CD4-positive, alpha-beta T cell (primary cell): ENCODE measurements at regions of chr12 and their contacts with region 1.

Region 1: DNA sequence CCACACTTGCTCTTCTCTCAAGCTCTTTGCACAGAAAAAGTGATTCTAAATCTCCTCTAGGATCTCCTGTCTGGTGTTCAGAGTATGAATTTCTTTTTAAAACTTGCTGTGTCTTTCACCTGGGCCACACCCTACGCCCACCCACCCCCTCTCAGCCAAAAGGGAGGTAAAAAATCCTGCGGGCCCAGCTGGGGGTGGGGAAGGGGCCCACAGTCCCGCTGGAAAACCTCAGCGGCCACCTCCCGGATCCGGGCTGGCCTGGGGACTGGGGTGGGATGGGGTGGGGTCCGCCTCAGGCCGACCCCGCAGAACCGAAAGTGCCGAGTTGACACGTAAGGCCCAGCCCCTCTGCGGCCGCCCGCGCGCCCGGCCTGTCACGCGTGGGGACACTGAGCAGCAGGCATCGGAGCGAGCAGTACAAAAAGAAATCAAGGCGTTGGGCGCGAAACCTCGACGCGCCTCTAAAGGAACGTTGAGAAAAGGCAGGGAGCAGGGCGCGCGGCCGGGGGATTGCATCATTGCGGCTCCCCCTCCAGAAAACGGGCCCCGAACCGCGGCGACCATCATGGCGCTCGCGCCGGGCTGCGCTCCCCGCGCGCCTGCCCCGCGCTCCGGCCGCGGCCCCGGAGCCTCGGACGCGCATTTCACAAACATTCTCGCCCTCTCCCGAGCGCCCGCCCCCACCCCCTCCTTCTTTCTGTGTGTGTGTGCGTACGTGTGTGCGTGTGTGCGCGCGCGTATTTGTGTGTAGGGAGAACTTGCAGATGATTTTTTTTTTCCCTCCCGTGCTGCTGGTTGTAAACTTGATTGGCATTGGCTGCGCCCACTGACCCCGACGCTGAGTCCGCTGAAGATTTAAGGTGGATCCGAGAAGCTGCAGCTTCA is 7.7 kb downstream of the CDKN1B start:
- DNase-seq: peak in 11 of 14 experiments; percentile 72 to 98 (median 84)
- ATAC-seq: peak; percentile 56
- H3K4me3 ChIP-seq: peak overlapping the region; percentile 97
- H3K4me3 Mint-ChIP-seq: peak overlapping the region; percentile 98
- H3K27ac ChIP-seq: peak overlapping the region; percentile 89 to 91
- H3K27ac Mint-ChIP-seq: peak overlapping the region; percentile 95
- H3K4me1 ChIP-seq: peaks cover 37% of the 10 kb centered on the region
- H3K4me1 Mint-ChIP-seq: peaks cover 63% of the 10 kb centered on the region
- H3K27me3 ChIP-seq: no peaks in the 10 kb centered on the region
- H3K27me3 Mint-ChIP-seq: peaks cover 8% of the 10 kb centered on the region
- CTCF ChIP-seq: no peak

Region 2: GRCh38 chr12:12349711-12350665 is 374.9 kb before region 1 on chr12 and contains the start of gene MANSC1:
- CTCF ChIA-PET with region 1: interaction called, 4 read pairs
- POLR2A ChIA-PET with region 1: interaction called, 19 read pairs
- intact Hi-C with region 1: loop called in 1 of 2 experiments (anchors 5 kb)
- DNase-seq: peak; percentile 14 to 79 (median 52)
- ATAC-seq: peak; percentile 71
- H3K4me3 ChIP-seq: peak within 1 kb of the TSS; percentile 54
- H3K4me3 Mint-ChIP-seq: peak within 1 kb of the TSS; percentile 72
- H3K27ac ChIP-seq: peak within 1 kb of the TSS; percentile 50 to 72
- H3K27ac Mint-ChIP-seq: peak within 1 kb of the TSS; percentile 79
- H3K4me1 ChIP-seq: peaks cover 24% of the 10 kb centered on the region
- H3K4me1 Mint-ChIP-seq: peaks cover 62% of the 10 kb centered on the region
- H3K27me3 ChIP-seq: no peaks in the 10 kb centered on the region
- H3K27me3 Mint-ChIP-seq: no peaks in the 10 kb centered on the region
- CTCF ChIP-seq: peak; percentile 48
- total RNA-seq, gene MANSC1: 0.33 to 0.45 TPM

Region 3: DNA sequence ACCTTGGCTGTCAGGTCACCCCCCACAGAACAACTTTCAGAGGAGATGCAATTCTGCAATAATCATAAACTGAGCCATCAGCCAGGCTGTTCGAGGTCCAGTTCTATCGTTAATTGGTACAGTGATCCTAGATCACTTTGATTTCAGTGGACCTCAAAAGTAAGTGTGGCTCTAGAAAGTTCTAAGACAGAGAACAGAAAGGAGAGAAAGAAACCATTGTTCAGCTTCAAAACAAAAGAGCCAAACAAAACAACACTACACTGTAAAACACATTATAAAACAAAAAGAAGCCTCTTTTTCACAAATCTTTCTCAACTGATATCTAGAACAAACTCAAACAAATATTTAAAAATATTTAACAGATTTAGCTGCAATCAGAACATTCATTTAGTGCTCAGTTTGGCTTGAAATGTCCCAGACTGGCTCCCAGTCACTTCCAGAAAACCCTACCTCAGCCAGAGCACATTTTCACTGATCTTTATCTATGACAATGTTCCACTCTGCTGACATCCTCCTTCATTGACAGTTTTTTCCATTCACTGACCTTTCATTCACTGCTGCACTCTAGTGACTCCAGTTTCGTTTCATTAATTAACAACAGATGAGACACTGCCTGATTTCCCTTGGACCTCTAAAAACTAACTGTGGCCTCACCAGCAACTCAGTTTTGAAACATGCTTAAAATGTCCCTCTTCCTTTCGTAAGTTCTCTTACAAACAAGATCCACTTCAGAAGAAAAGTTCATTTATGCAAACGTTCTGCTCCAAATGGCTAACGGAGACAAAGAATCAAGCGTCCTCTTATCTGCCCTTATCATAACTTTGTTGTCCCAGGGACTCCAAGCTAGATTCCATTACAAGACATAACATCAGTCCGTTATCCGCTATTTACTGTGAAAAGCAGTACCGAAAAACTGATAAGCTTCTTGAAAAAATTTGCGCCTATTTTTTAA is 219.1 kb before region 1 on chr12:
- CTCF ChIA-PET with region 1: no interaction called
- POLR2A ChIA-PET with region 1: no interaction called
- intact Hi-C with region 1: no loop called
- DNase-seq: peak in 1 of 14 experiments; percentile 70
- ATAC-seq: peak; percentile 31
- H3K4me3 ChIP-seq: peak overlapping the region; percentile 4
- H3K4me3 Mint-ChIP-seq: peak overlapping the region; percentile 78
- H3K27ac ChIP-seq: peak overlapping the region in 1 of 2 donors; percentile 12
- H3K27ac Mint-ChIP-seq: peak overlapping the region; percentile 85
- H3K4me1 ChIP-seq: peaks cover 33% of the 10 kb centered on the region
- H3K4me1 Mint-ChIP-seq: peaks cover 71% of the 10 kb centered on the region
- H3K27me3 ChIP-seq: no peaks in the 10 kb centered on the region
- H3K27me3 Mint-ChIP-seq: no peaks in the 10 kb centered on the region
- CTCF ChIP-seq: no peak

Region 4: GRCh38 chr12:12534166-12534866 is 190.6 kb before region 1 on chr12:
- CTCF ChIA-PET with region 1: no interaction called
- POLR2A ChIA-PET with region 1: no interaction called
- intact Hi-C with region 1: no loop called
- DNase-seq: no peak
- ATAC-seq: no peak
- H3K4me3 ChIP-seq: no peak overlapping the region
- H3K4me3 Mint-ChIP-seq: no peak overlapping the region
- H3K27ac ChIP-seq: no peak overlapping the region
- H3K27ac Mint-ChIP-seq: peak overlapping the region; percentile 45
- H3K4me1 ChIP-seq: peaks cover 3% of the 10 kb centered on the region
- H3K4me1 Mint-ChIP-seq: peaks cover 43% of the 10 kb centered on the region
- H3K27me3 ChIP-seq: no peaks in the 10 kb centered on the region
- H3K27me3 Mint-ChIP-seq: no peaks in the 10 kb centered on the region
- CTCF ChIP-seq: no peak

Region 5: DNA sequence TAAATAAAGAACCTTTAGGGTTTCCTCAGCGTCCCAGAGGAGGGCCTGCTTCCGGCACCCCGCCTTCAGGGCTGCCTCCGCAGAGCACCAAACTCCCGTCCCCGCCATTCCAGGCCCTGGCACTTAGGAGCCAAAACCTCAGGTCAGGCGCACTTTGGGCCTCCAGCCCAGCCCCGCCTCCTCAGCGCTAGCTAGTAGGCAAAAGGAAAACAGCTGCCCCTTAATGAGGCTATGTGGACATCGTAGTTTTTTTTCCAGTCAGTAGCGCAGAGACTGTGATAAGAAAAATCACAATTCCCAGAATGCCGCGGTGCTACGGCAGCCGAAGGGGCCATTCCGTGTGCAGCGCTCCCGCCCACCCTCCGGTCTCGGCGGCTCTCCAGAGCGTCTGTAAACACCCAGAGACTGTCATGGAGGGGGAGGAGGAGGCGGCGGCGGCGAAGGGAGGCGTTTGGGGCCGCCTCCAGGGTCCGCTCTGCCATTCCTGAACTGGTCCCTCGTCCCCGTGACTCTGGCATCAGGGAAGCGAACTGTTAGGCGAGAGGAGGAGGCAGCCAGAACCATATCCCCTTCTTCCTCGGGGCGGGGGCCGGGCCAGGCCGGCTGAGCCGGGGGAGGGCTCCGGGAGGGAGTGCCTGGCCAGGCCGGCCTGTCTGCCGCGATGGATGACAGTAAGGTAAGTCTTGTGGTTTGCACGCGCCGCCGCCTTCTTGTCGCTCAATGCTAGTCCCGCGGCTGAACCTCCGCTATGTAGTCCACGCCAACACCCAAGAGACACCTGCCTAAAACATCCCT is 113.2 kb before region 1 on chr12 and contains the start of gene CREBL2:
- CTCF ChIA-PET with region 1: no interaction called
- POLR2A ChIA-PET with region 1: interaction called, 13 read pairs
- intact Hi-C with region 1: loop called in 1 of 2 experiments (anchors 5 kb)
- DNase-seq: peak; percentile 76 to 94 (median 83)
- ATAC-seq: peak; percentile 90
- H3K4me3 ChIP-seq: peak within 1 kb of the TSS; percentile 80
- H3K4me3 Mint-ChIP-seq: peak within 1 kb of the TSS; percentile 91
- H3K27ac ChIP-seq: peak within 1 kb of the TSS; percentile 92 to 97
- H3K27ac Mint-ChIP-seq: peak within 1 kb of the TSS; percentile 98
- H3K4me1 ChIP-seq: peaks cover 49% of the 10 kb centered on the region
- H3K4me1 Mint-ChIP-seq: peaks cover 71% of the 10 kb centered on the region
- H3K27me3 ChIP-seq: no peaks in the 10 kb centered on the region
- H3K27me3 Mint-ChIP-seq: no peaks in the 10 kb centered on the region
- CTCF ChIP-seq: no peak
- total RNA-seq, gene CREBL2: 9.5 to 12.6 TPM

Region 6: DNA sequence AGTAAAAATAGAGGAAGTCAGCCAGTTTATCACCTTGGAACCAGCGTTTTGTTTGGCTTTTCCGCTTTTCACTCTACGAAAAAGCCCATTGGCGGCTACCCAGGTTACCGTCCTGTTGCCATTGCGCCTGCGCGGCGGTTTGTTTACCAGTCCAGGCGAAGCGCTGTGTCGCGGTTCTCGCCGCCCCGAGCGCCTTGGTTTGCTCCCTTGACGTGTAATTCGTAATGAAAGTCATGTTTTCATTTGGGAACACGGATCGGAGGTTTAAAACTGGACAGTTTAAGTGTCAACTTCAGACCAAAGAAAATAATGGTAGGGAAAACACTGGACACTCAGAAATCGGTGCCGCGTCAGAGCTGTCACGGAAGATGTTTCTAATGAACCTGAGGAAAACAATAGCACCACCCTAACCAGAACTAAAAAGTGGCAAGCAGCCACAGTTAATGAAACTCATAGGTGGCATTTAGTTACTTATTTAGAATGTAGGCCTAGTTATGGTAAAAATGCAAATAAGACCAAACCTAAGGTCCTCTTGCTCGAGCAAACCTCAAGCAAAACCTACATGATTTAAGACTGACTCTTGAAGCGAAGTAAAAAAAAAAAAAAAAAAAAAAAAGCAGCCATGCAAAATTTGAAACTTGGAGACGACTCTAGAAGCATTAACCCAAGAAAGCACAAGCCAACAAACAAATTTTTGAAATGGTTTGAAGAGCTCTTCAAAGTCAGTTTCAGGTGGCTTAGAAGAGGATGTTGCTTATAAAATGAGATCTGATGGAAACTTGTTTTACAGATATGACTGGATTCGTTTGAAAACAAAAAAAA is 28.1 kb before region 1 on chr12:
- CTCF ChIA-PET with region 1: no interaction called
- POLR2A ChIA-PET with region 1: interaction called, 400 read pairs
- intact Hi-C with region 1: loop called in 1 of 2 experiments (anchors 2 kb)
- DNase-seq: peak; percentile 90 to 97 (median 92)
- ATAC-seq: peak; percentile 83
- H3K4me3 ChIP-seq: peak overlapping the region; percentile 61
- H3K4me3 Mint-ChIP-seq: peak overlapping the region; percentile 94
- H3K27ac ChIP-seq: peak overlapping the region; percentile 96 to 97
- H3K27ac Mint-ChIP-seq: peak overlapping the region; percentile 100
- H3K4me1 ChIP-seq: peaks cover 7% of the 10 kb centered on the region
- H3K4me1 Mint-ChIP-seq: peaks cover 41% of the 10 kb centered on the region
- H3K27me3 ChIP-seq: no peaks in the 10 kb centered on the region
- H3K27me3 Mint-ChIP-seq: no peaks in the 10 kb centered on the region
- CTCF ChIP-seq: no peak

Region 7: GRCh38 chr12:12736759-12737676 is 12.1 kb after region 1 on chr12:
- CTCF ChIA-PET with region 1: interaction called, 29 read pairs
- POLR2A ChIA-PET with region 1: interaction called, 414 read pairs
- intact Hi-C with region 1: loop called in 1 of 2 experiments (anchors 1 kb)
- DNase-seq: peak in 13 of 14 experiments; percentile 15 to 87 (median 33)
- ATAC-seq: peak; percentile 82
- H3K4me3 ChIP-seq: peak overlapping the region; percentile 34
- H3K4me3 Mint-ChIP-seq: peak overlapping the region; percentile 58
- H3K27ac ChIP-seq: peak overlapping the region; percentile 34 to 40
- H3K27ac Mint-ChIP-seq: peak overlapping the region; percentile 85
- H3K4me1 ChIP-seq: peaks cover 30% of the 10 kb centered on the region
- H3K4me1 Mint-ChIP-seq: peaks cover 41% of the 10 kb centered on the region
- H3K27me3 ChIP-seq: no peaks in the 10 kb centered on the region
- H3K27me3 Mint-ChIP-seq: no peaks in the 10 kb centered on the region
- CTCF ChIP-seq: peak; percentile 71

Region 8: DNA sequence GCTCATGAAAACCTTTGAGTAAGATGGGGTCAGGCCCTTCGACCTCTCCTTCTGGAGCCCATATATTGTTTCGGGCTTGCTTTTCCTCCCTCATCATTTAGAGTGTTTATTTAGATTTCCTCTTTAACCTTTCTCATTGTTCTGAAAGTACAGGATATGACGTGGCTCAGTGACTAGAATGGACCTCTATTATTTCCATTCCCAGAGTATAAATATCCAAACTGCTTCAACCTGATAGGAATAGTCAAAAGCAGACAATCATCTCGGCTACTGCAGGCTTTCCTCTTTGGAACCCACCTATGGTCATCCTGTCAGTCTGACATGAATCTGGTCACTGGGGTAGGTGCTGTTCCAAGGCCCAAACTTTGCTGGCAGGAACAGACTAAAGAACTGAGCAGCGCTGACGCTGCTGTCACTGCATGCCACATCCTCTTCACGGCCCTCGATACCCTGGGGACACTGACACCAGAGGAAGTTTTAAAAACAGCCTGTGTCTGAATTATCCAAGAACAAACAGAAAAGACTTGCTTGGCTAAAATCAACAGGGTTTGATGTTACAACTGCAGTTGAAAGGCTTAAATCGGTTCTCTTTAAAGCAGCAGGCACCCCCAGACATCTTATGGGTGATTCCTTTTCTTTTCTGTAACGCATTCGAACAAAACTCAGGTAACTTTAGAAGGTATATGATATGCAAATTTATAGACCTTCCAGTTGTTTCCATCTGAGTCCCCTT is 83.2 kb after region 1 on chr12:
- CTCF ChIA-PET with region 1: no interaction called
- POLR2A ChIA-PET with region 1: interaction called, 10 read pairs
- intact Hi-C with region 1: loop called in 1 of 2 experiments (anchors 1 kb)
- DNase-seq: peak; percentile 45 to 89 (median 61)
- ATAC-seq: peak; percentile 78
- H3K4me3 ChIP-seq: no peak overlapping the region
- H3K4me3 Mint-ChIP-seq: peak overlapping the region; percentile 72
- H3K27ac ChIP-seq: peak overlapping the region; percentile 70 to 94
- H3K27ac Mint-ChIP-seq: peak overlapping the region; percentile 97
- H3K4me1 ChIP-seq: peaks cover 49% of the 10 kb centered on the region
- H3K4me1 Mint-ChIP-seq: peaks cover 54% of the 10 kb centered on the region
- H3K27me3 ChIP-seq: no peaks in the 10 kb centered on the region
- H3K27me3 Mint-ChIP-seq: no peaks in the 10 kb centered on the region
- CTCF ChIP-seq: no peak

Region 9: DNA sequence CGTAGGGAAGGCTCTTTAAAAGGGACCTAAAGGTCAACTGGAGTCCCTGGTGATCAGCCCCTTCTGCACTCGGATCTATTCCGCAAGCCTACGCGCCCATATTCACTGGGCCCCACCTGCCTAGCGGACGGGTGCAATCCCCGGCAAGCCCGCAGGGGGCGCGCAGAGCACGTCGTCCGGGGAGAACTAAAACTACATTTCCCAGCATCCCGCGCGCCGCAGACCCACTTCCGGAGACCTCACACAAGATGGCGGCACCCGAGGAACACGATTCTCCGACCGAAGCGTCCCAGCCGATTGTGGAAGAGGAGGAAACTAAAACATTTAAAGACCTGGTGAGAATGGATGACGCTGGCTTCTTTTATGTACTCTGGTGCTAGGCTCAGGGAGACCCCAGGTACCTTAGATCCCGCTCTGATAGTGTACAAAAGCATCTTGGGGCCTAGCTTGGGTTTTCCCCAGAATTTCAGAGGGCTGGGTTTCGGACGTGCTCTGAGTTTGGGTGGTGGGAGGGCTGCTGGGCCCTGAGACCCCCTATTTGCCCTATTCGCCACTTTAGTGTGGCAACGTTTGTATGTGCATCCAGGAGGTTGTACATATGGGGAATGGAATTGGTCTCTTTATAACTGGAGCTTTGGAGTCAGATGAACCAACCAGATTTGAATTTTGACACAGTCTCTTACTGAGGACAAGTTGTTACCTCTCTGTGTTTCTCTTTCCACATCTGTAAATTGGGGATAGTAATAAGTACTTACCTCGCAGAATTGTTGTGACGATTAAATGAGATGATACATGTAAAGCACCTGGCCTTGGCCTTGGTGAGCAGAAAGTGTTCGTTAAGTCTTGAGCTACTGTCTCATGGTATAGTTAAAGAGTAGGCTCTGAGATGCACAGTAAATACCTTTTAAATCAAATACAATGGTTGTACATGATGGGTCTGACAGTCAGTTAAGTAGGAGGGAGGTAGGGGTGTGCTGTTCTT is 88.5 kb after region 1 on chr12 and contains the start of gene DDX47:
- CTCF ChIA-PET with region 1: no interaction called
- POLR2A ChIA-PET with region 1: interaction called, 10 read pairs
- intact Hi-C with region 1: loop called in 1 of 2 experiments (anchors 1 kb)
- DNase-seq: peak; percentile 94 to 99 (median 97)
- ATAC-seq: peak; percentile 83
- H3K4me3 ChIP-seq: peak within 1 kb of the TSS; percentile 95
- H3K4me3 Mint-ChIP-seq: peak within 1 kb of the TSS; percentile 94
- H3K27ac ChIP-seq: peak within 1 kb of the TSS; percentile 74 to 88
- H3K27ac Mint-ChIP-seq: peak within 1 kb of the TSS; percentile 91
- H3K4me1 ChIP-seq: peaks cover 42% of the 10 kb centered on the region
- H3K4me1 Mint-ChIP-seq: peaks cover 65% of the 10 kb centered on the region
- H3K27me3 ChIP-seq: no peaks in the 10 kb centered on the region
- H3K27me3 Mint-ChIP-seq: no peaks in the 10 kb centered on the region
- CTCF ChIP-seq: peak; percentile 96
- total RNA-seq, gene DDX47: 153 TPM

Region 10: DNA sequence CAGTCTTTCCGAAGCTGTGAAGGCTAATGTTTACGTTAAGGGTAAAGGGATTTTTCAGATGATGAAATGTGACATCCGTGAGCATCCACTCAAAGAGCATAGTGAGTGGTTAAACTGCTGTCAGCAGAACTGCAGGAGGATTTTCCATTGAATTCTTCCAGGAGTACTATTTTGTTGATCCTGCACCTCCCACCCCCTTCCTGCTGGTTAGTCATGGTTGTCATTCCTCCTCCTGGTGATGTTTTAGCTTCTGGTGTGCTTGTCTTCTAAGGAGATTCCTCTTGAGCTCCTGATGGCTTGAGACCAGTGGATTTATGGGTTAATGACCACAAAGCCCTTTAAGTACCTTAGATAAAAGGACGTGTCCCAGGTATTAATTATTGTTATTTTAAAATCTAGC is 229.5 kb after region 1 on chr12:
- CTCF ChIA-PET with region 1: no interaction called
- POLR2A ChIA-PET with region 1: no interaction called
- intact Hi-C with region 1: no loop called
- DNase-seq: no peak
- ATAC-seq: no peak
- H3K4me3 ChIP-seq: no peak overlapping the region
- H3K4me3 Mint-ChIP-seq: no peak overlapping the region
- H3K27ac ChIP-seq: no peak overlapping the region
- H3K27ac Mint-ChIP-seq: no peak overlapping the region
- H3K4me1 ChIP-seq: no peaks in the 10 kb centered on the region
- H3K4me1 Mint-ChIP-seq: no peaks in the 10 kb centered on the region
- H3K27me3 ChIP-seq: no peaks in the 10 kb centered on the region
- H3K27me3 Mint-ChIP-seq: peaks cover 9% of the 10 kb centered on the region
- CTCF ChIP-seq: no peak